ENCODE measurements at regions of chr19 and their contacts with region 1.

Region 1: GRCh38 chr19:51097166-51097738 is 11.0 kb downstream of the CTU1 start:
- DNase-seq: peak; percentile 93
- H3K4me3 ChIP-seq: no peak overlapping the region
- H3K27ac ChIP-seq: no peak overlapping the region
- H3K4me1 ChIP-seq: peaks cover 13% of the 10 kb centered on the region
- H3K27me3 ChIP-seq: no peaks in the 10 kb centered on the region
- CTCF ChIP-seq: peak; percentile 67 to 75

Region 2: DNA sequence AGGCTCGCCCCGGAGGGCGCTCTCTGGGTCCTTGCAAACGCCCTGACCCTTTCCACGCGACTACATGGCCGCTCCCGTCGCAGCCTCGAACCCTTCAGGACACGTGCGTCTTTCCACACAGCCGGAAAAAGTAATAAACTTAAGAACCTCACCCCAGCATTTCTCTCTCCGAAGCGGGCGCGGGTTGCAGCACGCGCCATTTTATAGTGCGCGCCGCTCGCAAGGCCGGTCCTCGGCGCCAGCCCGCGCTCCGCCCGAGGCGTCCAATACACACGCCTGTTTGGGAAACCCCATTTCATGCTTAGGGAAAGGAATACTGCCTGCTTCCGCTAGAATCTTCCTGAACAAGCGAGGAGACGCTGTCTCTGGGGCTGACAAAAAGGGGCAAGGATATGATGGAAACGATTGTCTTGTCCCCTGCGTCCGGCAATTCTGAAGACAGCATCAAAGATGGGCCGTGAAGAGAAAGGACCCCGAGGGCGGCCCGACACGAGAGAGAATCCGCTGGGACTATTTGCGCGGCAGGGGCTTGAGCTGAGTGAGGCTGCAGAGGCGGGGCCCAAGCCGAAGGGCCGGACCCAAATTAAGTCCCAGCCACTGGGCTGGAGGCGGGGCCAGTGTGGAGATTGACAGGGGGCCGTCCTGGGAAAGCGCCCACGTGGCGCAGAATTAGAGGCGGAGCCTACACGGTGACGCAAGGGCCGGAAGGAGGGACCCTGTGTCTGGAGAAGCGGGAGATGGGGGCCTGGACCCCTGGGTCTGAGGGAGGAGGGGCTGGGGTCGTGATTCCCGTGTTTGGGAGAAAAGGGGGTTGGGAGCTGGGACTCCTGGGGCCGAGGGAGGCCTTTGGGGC is 292.6 kb before region 1 on chr19:
- CTCF ChIA-PET with region 1: no interaction called
- dilution Hi-C with region 1: no loop called
- in situ Hi-C with region 1: no loop called
- intact Hi-C with region 1: loop called (anchors 1 kb)
- DNase-seq: peak; percentile 98
- H3K4me3 ChIP-seq: peak overlapping the region; percentile 80 to 90 (median 83)
- H3K27ac ChIP-seq: peak overlapping the region; percentile 95
- H3K4me1 ChIP-seq: peaks cover 17% of the 10 kb centered on the region
- H3K27me3 ChIP-seq: no peaks in the 10 kb centered on the region
- CTCF ChIP-seq: no peak

Region 3: GRCh38 chr19:51064534-51065220 is 32.6 kb before region 1 on chr19 and contains the start of gene KLK13:
- CTCF ChIA-PET with region 1: interaction called, 12 read pairs
- dilution Hi-C with region 1: no loop called
- in situ Hi-C with region 1: no loop called
- intact Hi-C with region 1: no loop called
- DNase-seq: peak; percentile 12
- H3K4me3 ChIP-seq: peak within 1 kb of the TSS in 2 of 3 experiments; percentile 27 to 31
- H3K27ac ChIP-seq: no peak within 1 kb of the TSS
- H3K4me1 ChIP-seq: peaks cover 9% of the 10 kb centered on the region
- H3K27me3 ChIP-seq: no peaks in the 10 kb centered on the region
- CTCF ChIP-seq: no peak
- total RNA-seq, gene KLK13: 0.28 to 0.83 TPM

Measured in mammary epithelial cell (primary cell).